Heart left ventricle (tissue), 16 donors: ENCODE measurements at regions of chr15 and their contacts with region 1.

Region 1: GRCh38 chr15:91208371-91208770 is 108.3 kb downstream of the SV2B start:
- DNase-seq: no peak
- ATAC-seq: no peak
- H3K4me3 ChIP-seq: no peak overlapping the region
- H3K27ac ChIP-seq: no peak overlapping the region
- H3K4me1 ChIP-seq: no peaks in the 10 kb centered on the region
- H3K27me3 ChIP-seq: peaks cover 0 to 9% (median 0%) of the 10 kb centered on the region in 9 donors
- CTCF ChIP-seq: no peak
- POLR2A ChIP-seq: no peak

Region 2: GRCh38 chr15:90233376-90234095 is 974.8 kb before region 1 on chr15 and contains the start of gene CIB1:
- intact Hi-C with region 1: no loop called
- DNase-seq: peak; percentile 98 to 99 (median 98)
- ATAC-seq: peak; percentile 91 to 96 (median 94)
- H3K4me3 ChIP-seq: peak within 1 kb of the TSS; percentile 70 to 98 (median 84)
- H3K27ac ChIP-seq: peak within 1 kb of the TSS; percentile 67 to 98 (median 92)
- H3K4me1 ChIP-seq: peaks cover 3 to 53% (median 30%) of the 10 kb centered on the region in 12 donors
- H3K27me3 ChIP-seq: no peaks in the 10 kb centered on the region
- CTCF ChIP-seq: peak in 9 of 12 donors; percentile 13 to 57 (median 47)
- POLR2A ChIP-seq: peak in 1 of 2 donors; percentile 21
- total RNA-seq, gene CIB1: 38.7 to 107 (median 80.8) TPM

Region 3: GRCh38 chr15:91238644-91239425 is 30.5 kb after region 1 on chr15:
- intact Hi-C with region 1: no loop called
- DNase-seq: peak in 1 of 5 donors; percentile 38
- ATAC-seq: no peak
- H3K4me3 ChIP-seq: no peak overlapping the region
- H3K27ac ChIP-seq: peak overlapping the region in 1 of 12 donors; percentile 24
- H3K4me1 ChIP-seq: peaks cover 0 to 18% (median 0%) of the 10 kb centered on the region in 12 donors
- H3K27me3 ChIP-seq: peaks cover 0 to 4% (median 0%) of the 10 kb centered on the region in 9 donors
- CTCF ChIP-seq: no peak
- POLR2A ChIP-seq: no peak

Region 4: DNA sequence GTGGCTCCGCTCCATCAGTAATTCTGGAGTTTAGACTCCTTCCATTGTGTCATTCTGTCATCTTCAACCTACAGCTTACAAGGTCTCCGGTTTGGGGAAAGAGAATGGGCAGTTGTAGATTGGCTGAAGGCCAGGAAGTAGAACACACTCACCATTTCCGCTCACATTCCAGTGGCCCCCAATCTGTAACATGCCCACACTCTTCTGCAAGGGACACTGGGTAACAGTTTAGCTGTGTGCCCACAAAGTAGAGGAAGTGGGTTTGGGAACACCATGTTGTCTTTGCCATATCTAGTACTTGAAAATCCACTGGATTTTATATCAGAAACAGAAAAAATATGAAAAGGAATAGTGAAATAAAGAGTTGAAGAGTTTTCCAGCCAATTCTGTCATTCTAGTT is 45.2 kb after region 1 on chr15:
- intact Hi-C with region 1: loop called in 1 of 10 experiments (anchors 2 kb)
- DNase-seq: no peak
- ATAC-seq: peak in 1 of 4 donors; percentile 32
- H3K4me3 ChIP-seq: no peak overlapping the region
- H3K27ac ChIP-seq: no peak overlapping the region
- H3K4me1 ChIP-seq: peaks cover 0 to 8% (median 0%) of the 10 kb centered on the region in 12 donors
- H3K27me3 ChIP-seq: no peaks in the 10 kb centered on the region
- CTCF ChIP-seq: no peak
- POLR2A ChIP-seq: no peak

Region 5: GRCh38 chr15:91282486-91282885 is 74.1 kb after region 1 on chr15:
- intact Hi-C with region 1: no loop called
- DNase-seq: no peak
- ATAC-seq: no peak
- H3K4me3 ChIP-seq: no peak overlapping the region
- H3K27ac ChIP-seq: no peak overlapping the region
- H3K4me1 ChIP-seq: no peaks in the 10 kb centered on the region
- H3K27me3 ChIP-seq: no peaks in the 10 kb centered on the region
- CTCF ChIP-seq: no peak
- POLR2A ChIP-seq: no peak